ENCODE measurements at regions of chr21 and their contacts with region 1.

Region 1: DNA sequence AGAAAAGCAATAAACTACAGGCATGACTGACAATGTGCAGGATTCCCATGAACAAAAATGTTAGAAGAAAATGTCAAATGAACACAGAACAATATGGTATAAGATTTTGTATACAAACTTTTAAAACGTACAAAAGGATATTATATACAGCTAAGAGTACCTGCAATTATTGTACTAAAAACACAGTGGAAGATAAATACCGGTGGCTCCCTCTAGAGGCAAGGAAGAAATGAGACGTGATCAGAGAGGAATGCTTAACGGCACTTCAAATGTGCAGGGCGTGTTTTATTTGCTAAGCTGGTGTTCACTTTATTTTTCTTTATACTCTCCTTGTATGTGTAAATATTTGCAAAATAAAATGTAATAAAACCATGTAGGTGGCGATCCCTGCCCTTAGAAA is 191.8 kb upstream of the SAMSN1 start:
- DNase-seq: no peak
- CTCF ChIP-seq: peak; percentile 65

Region 2: DNA sequence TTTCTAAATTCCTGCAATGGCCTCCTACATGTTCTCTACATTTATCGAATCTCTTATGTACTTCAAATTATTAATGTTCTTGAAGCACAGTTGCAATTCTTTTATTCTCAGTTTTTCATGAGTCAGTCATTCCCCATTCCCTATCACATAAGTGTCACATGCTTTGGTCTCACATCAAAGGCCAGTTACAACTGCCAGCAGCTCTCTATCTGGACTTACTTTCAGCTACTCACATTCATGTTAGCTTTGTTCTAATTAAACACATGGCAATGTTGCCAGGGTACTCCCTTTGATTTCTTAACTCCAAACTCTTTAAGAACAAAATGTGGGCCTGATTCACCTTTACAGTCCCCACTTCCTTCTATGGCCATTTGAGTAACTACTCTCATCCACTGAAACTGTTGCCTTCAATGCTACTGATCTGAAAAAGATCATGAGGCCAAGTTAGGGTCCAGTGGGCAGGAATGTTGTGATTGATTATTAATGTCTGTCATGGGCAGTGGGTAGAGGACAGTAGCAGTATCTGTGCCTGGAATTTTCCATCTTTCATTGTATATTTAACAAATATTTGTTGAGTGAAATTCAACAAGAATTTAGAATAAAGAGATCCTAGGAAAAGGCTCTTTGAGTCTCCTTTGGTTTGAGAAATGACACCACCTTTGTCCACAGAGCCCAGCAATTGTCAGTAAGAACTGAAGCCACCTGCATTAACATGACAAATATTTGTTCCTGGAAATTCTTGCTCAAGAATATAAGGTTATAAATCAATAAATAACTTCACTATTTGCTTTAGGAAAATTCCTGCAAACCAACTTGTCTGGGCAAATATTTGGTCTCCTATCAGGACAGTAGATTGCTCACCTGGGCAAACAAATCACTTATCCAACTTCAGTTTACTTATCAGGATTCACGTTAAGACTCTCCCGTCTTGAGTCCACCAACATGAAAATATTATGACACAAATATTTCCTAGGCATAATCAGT is 38.2 kb before region 1 on chr21:
- in situ Hi-C with region 1: loop called (anchors 5 kb)
- DNase-seq: no peak
- CTCF ChIP-seq: no peak

Region 3: GRCh38 chr21:14797543-14797942 is 59.6 kb after region 1 on chr21:
- in situ Hi-C with region 1: no loop called
- DNase-seq: no peak
- CTCF ChIP-seq: no peak

Region 4: DNA sequence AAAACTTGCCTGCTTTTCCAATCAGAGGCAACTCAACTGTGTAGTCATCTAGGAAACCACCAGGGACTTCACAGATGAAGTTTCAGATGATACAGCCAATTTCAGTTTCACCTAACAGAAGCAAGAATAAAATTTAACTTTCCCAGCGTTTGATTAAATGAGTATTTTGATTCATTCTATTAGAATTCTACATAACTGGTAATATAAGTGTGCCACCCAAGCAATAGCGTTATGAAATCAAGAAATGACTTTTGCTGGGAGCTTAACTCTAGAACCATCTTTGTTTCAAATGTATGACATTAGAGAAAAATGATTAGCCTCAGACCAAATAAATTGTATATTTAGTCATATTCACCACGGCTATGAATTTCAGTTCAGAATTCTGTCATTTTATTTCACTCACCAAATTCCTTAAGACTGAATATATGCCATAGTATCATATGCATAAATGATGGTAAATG is 87.6 kb after region 1 on chr21:
- in situ Hi-C with region 1: loop called (anchors 25 kb)
- DNase-seq: peak; percentile 43
- CTCF ChIP-seq: no peak

Region 5: GRCh38 chr21:14926186-14926585 is 188.3 kb after region 1 on chr21:
- in situ Hi-C with region 1: no loop called
- DNase-seq: no peak
- CTCF ChIP-seq: no peak

Region 6: GRCh38 chr21:15483138-15483780 is 745.3 kb after region 1 on chr21:
- in situ Hi-C with region 1: loop called (anchors 25 kb)
- DNase-seq: peak; percentile 48
- CTCF ChIP-seq: peak; percentile 90